GM12878 (cell line): ENCODE measurements at regions of chr10 and their contacts with region 1.

Region 1: GRCh38 chr10:86399879-86400704 is 33.5 kb upstream of the GRID1 start:
- DNase-seq: peak; percentile 83
- ATAC-seq: peak; percentile 92
- H3K4me3 ChIP-seq: peak overlapping the region; percentile 75
- H3K27ac ChIP-seq: peak overlapping the region; percentile 84
- H3K4me1 ChIP-seq: peaks cover 10% of the 10 kb centered on the region
- H3K27me3 ChIP-seq: no peaks in the 10 kb centered on the region
- CTCF ChIP-seq: peak; percentile 89 to 98 (median 97)
- EP300 ChIP-seq: peak in 1 of 2 experiments; percentile 37; a peak in 1 of 4 replicates
- POLR2A ChIP-seq: peak; percentile 85
- RAD21 ChIP-seq: peak; percentile 85

Region 2: DNA sequence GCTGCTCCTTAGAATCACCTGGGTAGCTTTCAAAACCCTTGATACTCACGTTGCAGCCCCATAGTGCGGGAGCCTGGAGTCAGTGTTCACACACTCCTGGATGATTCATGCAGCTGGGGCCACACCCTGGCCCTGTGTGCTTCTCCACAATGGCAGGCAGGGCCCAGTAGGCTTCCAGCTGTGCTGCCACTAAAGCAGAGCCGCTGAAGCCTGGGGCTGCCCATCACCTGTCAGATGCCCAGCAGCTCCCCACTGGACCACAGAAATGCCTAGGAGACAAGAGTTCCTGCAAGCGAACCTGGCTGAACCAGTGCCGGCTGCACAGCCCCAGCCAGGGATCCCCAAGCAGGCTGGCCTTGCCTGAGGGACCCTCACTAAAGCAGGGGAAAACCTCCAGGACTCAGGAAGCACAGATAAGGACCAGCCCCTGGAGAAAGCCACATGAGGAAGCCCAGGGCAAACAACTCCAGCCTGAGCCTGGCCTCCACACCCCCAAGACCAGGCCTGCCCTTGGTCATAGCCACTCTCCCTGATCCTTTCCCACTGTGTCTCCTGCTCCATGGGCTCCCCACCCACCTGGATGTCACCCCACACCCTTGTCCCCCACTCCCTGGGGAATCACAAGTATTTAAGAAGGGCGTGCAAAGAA is 145.4 kb before region 1 on chr10:
- CTCF ChIA-PET with region 1: no interaction called
- POLR2A ChIA-PET with region 1: no interaction called
- RAD21 ChIA-PET with region 1: no interaction called
- SMC1A ChIA-PET with region 1: no interaction called
- in situ Hi-C with region 1: no loop called
- intact Hi-C with region 1: no loop called
- DNase-seq: no peak
- ATAC-seq: no peak
- H3K4me3 ChIP-seq: no peak overlapping the region
- H3K27ac ChIP-seq: no peak overlapping the region
- H3K4me1 ChIP-seq: no peaks in the 10 kb centered on the region
- H3K27me3 ChIP-seq: no peaks in the 10 kb centered on the region; a peak in 2 of 4 replicates
- CTCF ChIP-seq: no peak
- EP300 ChIP-seq: no peak
- POLR2A ChIP-seq: no peak
- RAD21 ChIP-seq: no peak

Region 3: GRCh38 chr10:86321568-86321967 is 78.5 kb before region 1 on chr10:
- CTCF ChIA-PET with region 1: no interaction called
- POLR2A ChIA-PET with region 1: no interaction called
- RAD21 ChIA-PET with region 1: no interaction called
- SMC1A ChIA-PET with region 1: no interaction called
- in situ Hi-C with region 1: no loop called
- intact Hi-C with region 1: no loop called
- DNase-seq: no peak
- ATAC-seq: no peak
- H3K4me3 ChIP-seq: no peak overlapping the region
- H3K27ac ChIP-seq: no peak overlapping the region
- H3K4me1 ChIP-seq: no peaks in the 10 kb centered on the region
- H3K27me3 ChIP-seq: peaks cover 2 to 5% of the 10 kb centered on the region in 2 experiments; a peak in 2 of 4 replicates
- CTCF ChIP-seq: no peak
- EP300 ChIP-seq: no peak
- POLR2A ChIP-seq: no peak
- RAD21 ChIP-seq: no peak

Region 4: DNA sequence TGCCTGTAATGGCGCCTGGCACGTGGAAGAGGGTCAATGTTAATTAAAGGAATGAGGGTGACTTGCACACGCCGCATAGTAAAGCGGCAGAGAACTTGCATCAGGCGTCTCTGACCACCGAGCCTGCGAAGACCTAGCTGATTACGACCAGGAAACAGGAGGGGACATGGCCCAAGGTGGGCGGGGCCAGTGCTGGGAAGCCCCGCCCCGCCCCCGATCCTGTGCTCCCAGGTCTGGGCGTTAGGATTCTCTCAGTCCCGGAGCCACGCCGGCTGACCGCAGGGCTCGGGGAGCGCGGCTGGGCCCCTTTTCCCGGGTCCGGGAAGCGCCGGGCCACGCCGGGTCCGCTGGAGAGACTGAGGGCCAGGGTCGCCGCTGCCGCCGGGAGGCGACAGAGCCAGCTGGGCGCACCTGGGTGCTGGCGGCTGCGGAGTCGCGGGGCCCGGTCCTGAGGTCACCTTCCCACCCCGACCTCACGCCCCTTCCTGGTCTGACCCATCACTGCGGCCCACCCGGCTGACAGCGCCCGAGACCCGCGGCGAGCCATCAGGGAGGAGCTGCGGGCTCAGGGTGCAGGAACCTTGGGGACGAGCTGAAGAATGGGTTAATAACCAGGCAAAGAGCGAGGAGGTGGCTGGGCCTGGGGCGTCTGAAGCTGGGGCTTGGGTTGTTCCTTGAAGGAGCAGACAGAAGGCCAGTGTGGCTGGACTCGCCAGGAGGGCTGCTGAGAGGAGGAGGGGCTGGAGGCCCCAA is 10.5 kb before region 1 on chr10:
- CTCF ChIA-PET with region 1: interaction called, 44 read pairs
- POLR2A ChIA-PET with region 1: interaction called, 58 read pairs
- RAD21 ChIA-PET with region 1: interaction called, 56 read pairs
- SMC1A ChIA-PET with region 1: interaction called, 12 read pairs
- in situ Hi-C with region 1: no loop called
- intact Hi-C with region 1: no loop called
- DNase-seq: no peak
- ATAC-seq: peak; percentile 85
- H3K4me3 ChIP-seq: peak overlapping the region; percentile 87
- H3K27ac ChIP-seq: peak overlapping the region; percentile 91
- H3K4me1 ChIP-seq: peaks cover 36% of the 10 kb centered on the region
- H3K27me3 ChIP-seq: no peaks in the 10 kb centered on the region
- CTCF ChIP-seq: peak; percentile 21 to 40 (median 21); a peak in 3 of 6 replicates
- EP300 ChIP-seq: no peak
- POLR2A ChIP-seq: peak; percentile 71
- RAD21 ChIP-seq: no peak

Region 5: DNA sequence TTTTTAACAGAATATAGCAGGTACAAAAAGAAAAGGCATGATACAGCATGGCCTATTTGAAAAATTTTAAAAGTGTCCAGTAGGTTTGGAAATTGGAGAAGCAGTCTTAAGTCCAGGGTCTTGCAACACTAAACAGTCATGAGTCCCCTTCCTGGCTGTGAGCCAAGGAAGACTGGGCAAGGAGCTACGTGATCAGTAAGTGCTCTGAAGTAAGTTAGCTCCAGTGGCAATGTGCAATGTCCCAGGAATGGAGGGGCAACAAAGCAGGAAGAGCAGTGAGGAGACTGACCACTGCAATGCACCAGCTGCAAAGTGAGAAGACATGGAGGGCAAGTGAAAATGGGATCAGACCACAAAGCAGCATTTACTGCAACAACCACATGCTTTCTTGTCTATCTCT is 39.5 kb after region 1 on chr10:
- CTCF ChIA-PET with region 1: interaction called, 15 read pairs
- POLR2A ChIA-PET with region 1: interaction called, 7 read pairs
- RAD21 ChIA-PET with region 1: interaction called, 5 read pairs
- SMC1A ChIA-PET with region 1: interaction called, 17 read pairs
- in situ Hi-C with region 1: no loop called
- intact Hi-C with region 1: no loop called
- DNase-seq: no peak
- ATAC-seq: no peak
- H3K4me3 ChIP-seq: no peak overlapping the region
- H3K27ac ChIP-seq: no peak overlapping the region
- H3K4me1 ChIP-seq: 0 out of 2 replicates have a peak, but pooled peaks cover 5% of the 10 kb centered on the region
- H3K27me3 ChIP-seq: no peaks in the 10 kb centered on the region
- CTCF ChIP-seq: no peak
- EP300 ChIP-seq: no peak
- POLR2A ChIP-seq: no peak
- RAD21 ChIP-seq: no peak

Region 6: GRCh38 chr10:86461963-86462804 is 62.1 kb after region 1 on chr10:
- CTCF ChIA-PET with region 1: interaction called, 4 read pairs
- POLR2A ChIA-PET with region 1: no interaction called
- RAD21 ChIA-PET with region 1: interaction called, 15 read pairs
- SMC1A ChIA-PET with region 1: interaction called, 7 read pairs
- in situ Hi-C with region 1: no loop called
- intact Hi-C with region 1: loop called (anchors 5 kb)
- DNase-seq: no peak
- ATAC-seq: no peak
- H3K4me3 ChIP-seq: no peak overlapping the region
- H3K27ac ChIP-seq: no peak overlapping the region
- H3K4me1 ChIP-seq: no peaks in the 10 kb centered on the region
- H3K27me3 ChIP-seq: no peaks in the 10 kb centered on the region
- CTCF ChIP-seq: no peak
- EP300 ChIP-seq: no peak
- POLR2A ChIP-seq: no peak
- RAD21 ChIP-seq: no peak

Region 7: DNA sequence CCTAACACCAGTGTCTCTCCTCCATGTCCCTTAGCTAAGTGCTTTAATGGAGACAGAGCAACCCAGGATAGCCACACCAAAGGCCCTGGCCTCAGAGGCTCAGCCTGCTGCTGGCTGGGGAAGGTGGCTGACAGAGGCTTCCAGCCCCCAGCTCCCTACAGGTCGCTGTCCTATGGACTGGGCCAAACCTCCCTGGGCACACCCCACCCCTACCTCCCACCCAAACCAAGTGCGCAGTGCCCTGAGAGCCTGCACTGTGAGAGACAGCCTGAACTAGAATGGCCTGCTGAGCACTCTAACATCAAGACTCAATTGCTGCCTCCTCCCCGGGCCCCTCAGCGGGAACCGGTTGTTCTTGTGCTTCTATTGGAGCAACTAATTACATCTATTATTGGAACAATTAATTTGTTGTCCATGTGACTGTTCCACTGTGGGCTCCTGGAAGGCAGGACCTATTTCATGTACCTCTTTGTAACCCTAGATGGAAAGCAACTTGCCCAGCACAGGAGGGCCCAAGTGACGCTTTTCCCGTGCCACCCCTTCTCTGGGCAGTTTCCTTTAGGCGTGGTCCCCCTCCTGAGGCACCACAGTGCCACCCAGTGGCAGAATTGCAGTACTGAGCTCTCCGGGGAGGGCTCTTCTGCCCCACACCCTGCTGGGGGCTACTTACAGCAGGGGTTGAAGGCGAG is 185.1 kb after region 1 on chr10:
- CTCF ChIA-PET with region 1: interaction called, 65 read pairs
- POLR2A ChIA-PET with region 1: interaction called, 16 read pairs
- RAD21 ChIA-PET with region 1: interaction called, 113 read pairs
- SMC1A ChIA-PET with region 1: interaction called, 59 read pairs
- in situ Hi-C with region 1: loop called (anchors 5 kb)
- intact Hi-C with region 1: loop called (anchors 1 kb)
- DNase-seq: peak; percentile 38
- ATAC-seq: peak; percentile 99
- H3K4me3 ChIP-seq: no peak overlapping the region
- H3K27ac ChIP-seq: no peak overlapping the region
- H3K4me1 ChIP-seq: no peaks in the 10 kb centered on the region
- H3K27me3 ChIP-seq: no peaks in the 10 kb centered on the region
- CTCF ChIP-seq: peak; percentile 92 to 96 (median 94)
- EP300 ChIP-seq: no peak
- POLR2A ChIP-seq: no peak
- RAD21 ChIP-seq: peak; percentile 98

Region 8: GRCh38 chr10:86668297-86669165 is 268.4 kb after region 1 on chr10 and contains the start of gene LDB3:
- CTCF ChIA-PET with region 1: no interaction called
- POLR2A ChIA-PET with region 1: no interaction called
- RAD21 ChIA-PET with region 1: no interaction called
- SMC1A ChIA-PET with region 1: no interaction called
- in situ Hi-C with region 1: no loop called
- intact Hi-C with region 1: loop called (anchors 10 kb)
- DNase-seq: peak; percentile 25
- ATAC-seq: peak; percentile 83
- H3K4me3 ChIP-seq: no peak within 1 kb of the TSS
- H3K27ac ChIP-seq: no peak within 1 kb of the TSS
- H3K4me1 ChIP-seq: no peaks in the 10 kb centered on the region
- H3K27me3 ChIP-seq: no peaks in the 10 kb centered on the region
- CTCF ChIP-seq: no peak
- EP300 ChIP-seq: 0 out of 4 replicates have a peak, but pooled peaks of 1 of the 2 experiments have one; percentile 39
- POLR2A ChIP-seq: no peak
- RAD21 ChIP-seq: no peak
- polyA plus RNA-seq, gene LDB3: 0.02 to 0.05 TPM